ENCODE measurements at regions of chr2 and their contacts with region 1.

Region 1: GRCh38 chr2:127526149-127527000 is at the start of gene IWS1:
- DNase-seq: peak; percentile 93 to 95 (median 94)
- H3K4me3 ChIP-seq: peak within 1 kb of the TSS; percentile 61
- H3K4me3 Mint-ChIP-seq: peak within 1 kb of the TSS; percentile 88 to 99 (median 96)
- H3K27ac ChIP-seq: peak within 1 kb of the TSS; percentile 98
- H3K27ac Mint-ChIP-seq: peak within 1 kb of the TSS; percentile 96 to 100 (median 98)
- H3K4me1 ChIP-seq: peaks cover 47% of the 10 kb centered on the region
- H3K4me1 Mint-ChIP-seq: peaks cover 26 to 62% (median 33%) of the 10 kb centered on the region in 4 donors
- H3K27me3 ChIP-seq: no peaks in the 10 kb centered on the region
- H3K27me3 Mint-ChIP-seq: no peaks in the 10 kb centered on the region
- total RNA-seq, gene IWS1: 55.2 to 59.7 TPM

Region 2: GRCh38 chr2:126657636-126658318 is 868.6 kb before region 1 on chr2:
- CTCF ChIA-PET with region 1: no interaction called
- POLR2A ChIA-PET with region 1: no interaction called
- intact Hi-C with region 1: loop called (anchors 2 kb)
- DNase-seq: peak; percentile 61 to 87 (median 74)
- H3K4me3 ChIP-seq: peak overlapping the region; percentile 79 to 96
- H3K4me3 Mint-ChIP-seq: peak overlapping the region; percentile 96 to 99 (median 98)
- H3K27ac ChIP-seq: peak overlapping the region; percentile 78
- H3K27ac Mint-ChIP-seq: peak overlapping the region; percentile 96 to 99 (median 97)
- H3K4me1 ChIP-seq: peaks cover 58% of the 10 kb centered on the region
- H3K4me1 Mint-ChIP-seq: peaks cover 42 to 77% (median 63%) of the 10 kb centered on the region in 4 donors
- H3K27me3 ChIP-seq: no peaks in the 10 kb centered on the region
- H3K27me3 Mint-ChIP-seq: no peaks in the 10 kb centered on the region

Region 3: DNA sequence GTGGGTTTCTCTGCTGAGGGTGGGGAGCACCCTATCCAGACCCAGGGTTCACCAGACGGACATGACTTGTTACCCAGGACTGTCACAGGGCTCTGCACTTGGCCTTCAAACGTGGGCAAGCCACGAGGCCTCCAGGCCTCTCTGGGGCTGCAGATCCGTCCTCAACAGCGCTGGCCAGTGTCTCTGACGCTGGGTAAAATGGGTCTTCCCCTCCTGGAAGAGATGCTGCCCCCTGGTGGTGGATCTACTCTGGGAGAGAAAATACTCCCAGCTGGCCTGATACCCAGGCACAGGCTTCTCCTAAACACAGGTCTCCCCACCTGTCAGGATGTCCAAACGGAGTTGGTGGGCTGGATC is 123.3 kb after region 1 on chr2:
- CTCF ChIA-PET with region 1: interaction called, 3 read pairs
- POLR2A ChIA-PET with region 1: interaction called, 6 read pairs
- intact Hi-C with region 1: loop called (anchors 1 kb)
- DNase-seq: peak; percentile 72 to 78 (median 73)
- H3K4me3 ChIP-seq: no peak overlapping the region
- H3K4me3 Mint-ChIP-seq: peak overlapping the region in 6 of 8 donors; percentile 38 to 70 (median 65)
- H3K27ac ChIP-seq: no peak overlapping the region
- H3K27ac Mint-ChIP-seq: peak overlapping the region in 3 of 7 donors; percentile 49 to 73 (median 52)
- H3K4me1 ChIP-seq: peaks cover 9% of the 10 kb centered on the region
- H3K4me1 Mint-ChIP-seq: peaks cover 12 to 21% (median 16%) of the 10 kb centered on the region in 4 donors
- H3K27me3 ChIP-seq: no peaks in the 10 kb centered on the region
- H3K27me3 Mint-ChIP-seq: no peaks in the 10 kb centered on the region

Region 4: GRCh38 chr2:127810619-127811396 is 284.4 kb after region 1 on chr2 and contains the start of gene WDR33:
- CTCF ChIA-PET with region 1: no interaction called
- POLR2A ChIA-PET with region 1: interaction called, 4 read pairs
- intact Hi-C with region 1: loop called (anchors 2 kb)
- DNase-seq: peak; percentile 92 to 95 (median 93)
- H3K4me3 ChIP-seq: peak within 1 kb of the TSS; percentile 68 to 98
- H3K4me3 Mint-ChIP-seq: peak within 1 kb of the TSS; percentile 93 to 99 (median 98)
- H3K27ac ChIP-seq: peak within 1 kb of the TSS; percentile 96
- H3K27ac Mint-ChIP-seq: peak within 1 kb of the TSS; percentile 98 to 100 (median 99)
- H3K4me1 ChIP-seq: peaks cover 47% of the 10 kb centered on the region
- H3K4me1 Mint-ChIP-seq: peaks cover 34 to 59% (median 48%) of the 10 kb centered on the region in 4 donors
- H3K27me3 ChIP-seq: no peaks in the 10 kb centered on the region
- H3K27me3 Mint-ChIP-seq: peaks cover 0 to 4% of the 10 kb centered on the region in 2 donors
- total RNA-seq, gene WDR33: 84.9 to 86.2 TPM

Region 5: GRCh38 chr2:128027801-128028667 is 501.7 kb after region 1 on chr2 and contains the start of gene SAP130:
- CTCF ChIA-PET with region 1: no interaction called
- POLR2A ChIA-PET with region 1: interaction called, 5 read pairs
- intact Hi-C with region 1: loop called (anchors 1 kb)
- DNase-seq: peak; percentile 97 to 99 (median 98)
- H3K4me3 ChIP-seq: peak within 1 kb of the TSS; percentile 36 to 82
- H3K4me3 Mint-ChIP-seq: peak within 1 kb of the TSS; percentile 94 to 99 (median 98)
- H3K27ac ChIP-seq: peak within 1 kb of the TSS; percentile 73
- H3K27ac Mint-ChIP-seq: peak within 1 kb of the TSS; percentile 93 to 98 (median 97)
- H3K4me1 ChIP-seq: peaks cover 23% of the 10 kb centered on the region
- H3K4me1 Mint-ChIP-seq: peaks cover 15 to 24% (median 20%) of the 10 kb centered on the region in 4 donors
- H3K27me3 ChIP-seq: no peaks in the 10 kb centered on the region
- H3K27me3 Mint-ChIP-seq: no peaks in the 10 kb centered on the region
- total RNA-seq, gene SAP130: 25.5 to 30.2 TPM